AG04450 (cell line): ENCODE measurements at regions of chr5 and their contacts with region 1.

Region 1: DNA sequence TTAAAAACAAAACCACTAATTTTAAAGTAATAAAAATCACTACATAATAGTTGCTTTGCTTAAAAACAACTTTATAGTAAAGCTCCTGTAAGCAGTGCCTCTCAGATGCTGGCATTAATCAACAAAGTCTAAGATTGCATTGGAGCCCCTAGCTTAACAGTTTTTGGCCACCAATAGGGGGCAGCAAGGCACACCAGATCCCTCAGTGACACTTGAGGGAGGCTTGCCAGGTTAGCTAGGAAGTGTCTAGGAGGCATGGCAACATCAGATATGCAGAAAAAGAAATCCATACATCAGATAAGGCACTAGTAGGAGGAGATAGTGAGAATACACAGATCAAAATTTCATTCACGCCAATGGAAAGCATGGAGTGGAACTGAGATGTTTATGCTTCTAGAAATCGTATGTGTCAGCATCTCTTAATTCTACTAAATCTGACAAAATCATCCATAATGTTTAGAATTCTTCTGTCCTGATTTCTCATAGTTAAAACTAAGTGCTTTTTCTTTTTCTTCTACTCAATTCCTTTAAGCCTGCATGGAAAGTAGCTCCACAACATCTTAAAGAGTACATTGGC is 73.6 kb upstream of the PAM start:
- DNase-seq: peak; percentile 36
- H3K4me3 ChIP-seq: no peak overlapping the region
- H3K27ac ChIP-seq: no peak overlapping the region
- H3K27me3 ChIP-seq: no peaks in the 10 kb centered on the region
- CTCF ChIP-seq: peak; percentile 87

Region 2: DNA sequence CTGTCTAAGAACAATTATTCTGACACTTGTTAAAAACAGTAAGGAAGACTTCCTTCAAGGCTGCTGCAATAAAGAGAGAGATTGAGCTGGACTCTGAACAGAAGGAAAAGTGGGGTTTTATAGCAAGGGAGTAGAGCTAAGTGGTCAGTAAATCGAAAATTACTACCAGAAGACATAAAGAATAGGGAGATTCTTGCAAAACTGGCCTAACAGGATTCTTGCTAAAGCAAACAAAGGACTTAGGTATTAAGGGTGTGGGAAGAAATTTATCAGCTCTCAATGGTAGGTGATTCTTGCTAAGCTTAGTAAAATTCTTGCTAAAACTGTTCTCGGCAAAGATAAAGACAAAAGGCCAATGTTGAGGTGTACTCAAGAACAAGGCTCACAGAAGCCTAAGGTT is 685.9 kb before region 1 on chr5:
- CTCF ChIA-PET with region 1: no interaction called
- POLR2A ChIA-PET with region 1: no interaction called
- DNase-seq: no peak
- H3K4me3 ChIP-seq: no peak overlapping the region
- H3K27ac ChIP-seq: no peak overlapping the region
- H3K27me3 ChIP-seq: no peaks in the 10 kb centered on the region
- CTCF ChIP-seq: no peak

Region 3: DNA sequence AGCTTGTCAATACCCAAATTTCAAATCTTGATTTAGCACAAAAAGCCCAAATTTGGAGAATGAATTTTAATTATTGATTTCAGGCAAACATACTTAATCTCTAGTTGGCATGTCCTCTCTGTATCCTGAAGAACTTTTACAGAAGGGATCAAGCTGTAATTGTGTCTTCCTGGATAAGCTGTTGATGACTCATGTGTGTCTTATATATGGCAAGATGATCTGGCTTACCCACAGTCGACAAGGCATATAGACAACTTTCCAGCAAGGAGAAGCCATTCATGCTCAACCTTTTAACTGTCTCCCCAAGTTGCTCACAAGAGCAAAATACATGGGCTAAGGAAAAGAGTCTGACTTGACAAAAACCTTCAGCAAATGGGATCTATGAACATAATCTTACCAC is 70.2 kb before region 1 on chr5:
- CTCF ChIA-PET with region 1: no interaction called
- POLR2A ChIA-PET with region 1: no interaction called
- DNase-seq: no peak
- H3K4me3 ChIP-seq: no peak overlapping the region
- H3K27ac ChIP-seq: no peak overlapping the region
- H3K27me3 ChIP-seq: no peaks in the 10 kb centered on the region
- CTCF ChIP-seq: no peak

Region 4: GRCh38 chr5:102668220-102668932 is 13.1 kb before region 1 on chr5:
- CTCF ChIA-PET with region 1: interaction called, 10 read pairs
- POLR2A ChIA-PET with region 1: no interaction called
- DNase-seq: no peak
- H3K4me3 ChIP-seq: no peak overlapping the region
- H3K27ac ChIP-seq: no peak overlapping the region
- H3K27me3 ChIP-seq: peaks cover 3% of the 10 kb centered on the region
- CTCF ChIP-seq: no peak

Region 5: GRCh38 chr5:102722930-102723329 is 41.4 kb after region 1 on chr5:
- CTCF ChIA-PET with region 1: interaction called, 12 read pairs
- POLR2A ChIA-PET with region 1: no interaction called
- DNase-seq: no peak
- H3K4me3 ChIP-seq: no peak overlapping the region
- H3K27ac ChIP-seq: no peak overlapping the region
- H3K27me3 ChIP-seq: no peaks in the 10 kb centered on the region
- CTCF ChIP-seq: no peak

Region 6: DNA sequence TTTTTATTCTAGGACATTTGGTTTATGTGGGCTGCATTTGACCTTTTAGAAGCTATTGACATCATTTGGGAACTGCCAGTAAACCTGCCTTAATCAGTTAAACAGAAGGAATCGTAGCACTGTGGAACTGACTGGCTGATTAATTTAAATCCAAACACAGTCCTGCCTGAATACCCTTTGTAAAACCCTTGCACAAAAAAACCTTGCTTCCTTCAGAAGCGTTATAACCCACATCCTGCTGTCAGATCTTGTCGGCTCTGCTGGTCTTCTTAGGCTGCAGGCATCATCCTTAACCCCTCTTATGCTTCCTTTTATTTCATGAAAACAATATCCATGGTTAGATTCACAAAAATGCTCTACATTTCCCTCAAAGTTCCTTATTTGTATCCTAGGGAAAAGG is 119.9 kb after region 1 on chr5:
- CTCF ChIA-PET with region 1: interaction called, 11 read pairs
- POLR2A ChIA-PET with region 1: no interaction called
- DNase-seq: no peak
- H3K4me3 ChIP-seq: no peak overlapping the region
- H3K27ac ChIP-seq: no peak overlapping the region
- H3K27me3 ChIP-seq: no peaks in the 10 kb centered on the region
- CTCF ChIP-seq: no peak

Region 7: GRCh38 chr5:102815540-102816332 is 134.2 kb after region 1 on chr5:
- CTCF ChIA-PET with region 1: no interaction called
- POLR2A ChIA-PET with region 1: no interaction called
- DNase-seq: no peak
- H3K4me3 ChIP-seq: no peak overlapping the region
- H3K27ac ChIP-seq: no peak overlapping the region
- H3K27me3 ChIP-seq: no peaks in the 10 kb centered on the region
- CTCF ChIP-seq: no peak

Region 8: DNA sequence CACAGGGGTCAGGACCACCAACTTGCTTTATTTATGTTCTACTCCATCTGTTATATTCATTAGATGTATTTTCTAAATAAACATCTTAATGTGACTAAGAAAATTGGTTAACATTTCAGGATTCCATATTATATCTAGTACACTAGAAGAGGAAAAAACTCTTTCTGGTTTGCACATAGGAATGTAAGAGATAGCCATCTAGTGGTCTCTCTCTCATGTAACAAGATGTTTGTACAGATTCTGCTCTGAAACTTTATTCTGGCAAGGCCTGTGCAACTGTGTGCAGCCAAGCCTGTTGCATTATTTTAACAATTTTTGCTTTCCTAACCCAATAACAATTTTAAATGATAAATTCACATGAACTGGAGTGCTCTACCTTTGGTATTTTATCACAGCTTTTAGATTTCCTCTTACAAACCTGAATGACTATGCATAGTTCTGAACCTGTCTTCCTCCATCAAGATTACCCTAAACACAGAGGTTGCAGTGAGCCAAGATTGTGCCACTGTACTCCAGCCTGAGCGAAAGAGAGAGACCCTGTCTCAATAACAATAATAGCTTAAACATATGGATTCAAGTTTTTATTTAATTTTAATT is 290.3 kb after region 1 on chr5:
- CTCF ChIA-PET with region 1: interaction called, 44 read pairs
- POLR2A ChIA-PET with region 1: no interaction called
- DNase-seq: no peak
- H3K4me3 ChIP-seq: no peak overlapping the region
- H3K27ac ChIP-seq: no peak overlapping the region
- H3K27me3 ChIP-seq: no peaks in the 10 kb centered on the region
- CTCF ChIP-seq: peak; percentile 66

Region 9: GRCh38 chr5:103041071-103041676 is 359.7 kb after region 1 on chr5:
- CTCF ChIA-PET with region 1: interaction called, 40 read pairs
- POLR2A ChIA-PET with region 1: no interaction called
- DNase-seq: peak; percentile 10
- H3K4me3 ChIP-seq: no peak overlapping the region
- H3K27ac ChIP-seq: no peak overlapping the region
- H3K27me3 ChIP-seq: no peaks in the 10 kb centered on the region
- CTCF ChIP-seq: peak; percentile 56